ENCODE measurements at regions of chr7 and their contacts with region 1.

Region 1: DNA sequence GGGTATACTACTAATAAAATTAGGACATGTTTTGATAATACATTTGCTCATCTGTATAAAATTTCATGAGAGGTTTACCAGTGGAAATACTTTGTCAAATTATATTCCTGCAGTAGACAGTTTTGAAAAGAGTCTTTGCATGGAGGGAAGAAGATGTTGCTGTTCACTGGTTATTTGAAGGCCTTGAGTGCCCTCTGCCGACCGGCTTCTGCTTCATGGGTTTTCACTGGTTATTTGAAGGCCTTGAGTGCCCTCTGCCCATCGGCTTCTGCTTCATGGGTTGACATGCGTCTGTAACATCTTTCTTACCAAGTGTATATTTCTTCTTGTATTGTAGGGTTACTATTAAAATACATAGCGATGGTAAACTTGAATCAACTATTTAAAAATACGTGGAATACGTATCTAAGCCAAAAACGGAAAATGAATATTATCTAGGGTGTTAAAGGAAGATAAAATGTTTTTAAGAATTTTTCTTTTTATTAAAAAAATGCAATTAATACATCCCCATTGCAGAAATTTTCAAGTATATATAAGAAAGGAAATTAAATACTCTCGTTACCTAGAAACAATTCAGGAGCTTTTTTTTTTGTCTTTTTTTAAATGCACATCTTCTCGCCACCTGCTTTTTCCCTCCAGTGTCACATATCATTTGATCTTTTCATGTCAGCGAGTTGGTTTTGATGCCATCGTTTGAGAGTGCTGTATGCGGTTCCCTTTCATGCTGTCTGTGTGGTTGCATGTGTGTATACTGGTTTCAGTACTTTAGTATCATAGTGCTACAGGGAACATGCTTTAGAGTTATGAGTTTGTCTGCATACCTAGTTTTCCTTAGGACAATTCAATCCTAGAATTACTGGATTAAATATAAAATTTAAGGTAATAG is 73.4 kb downstream of the SHH start:
- DNase-seq: peak; percentile 43 to 96 (median 82)

Region 2: DNA sequence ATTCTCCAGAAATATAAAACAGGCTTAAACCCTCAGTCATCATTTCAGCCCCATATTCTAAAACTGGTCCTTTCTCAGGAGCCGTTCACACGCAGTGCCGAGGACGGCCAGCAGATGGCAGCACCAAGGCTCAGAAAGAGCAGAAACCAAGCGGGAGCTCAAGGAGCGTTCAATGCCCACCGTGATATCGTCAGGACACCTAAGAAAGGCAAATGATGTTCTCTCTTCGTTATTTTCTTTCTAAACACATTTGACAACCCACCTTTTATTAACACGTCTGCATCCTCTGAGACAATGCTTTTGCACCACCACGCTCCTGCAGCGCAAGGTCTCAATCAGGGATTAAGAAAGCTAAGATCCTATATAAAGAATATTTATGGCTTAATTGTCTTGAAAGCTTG is 140.1 kb before region 1 on chr7:
- intact Hi-C with region 1: loop called (anchors 1 kb)
- DNase-seq: peak; percentile 64 to 97 (median 90)

Region 3: DNA sequence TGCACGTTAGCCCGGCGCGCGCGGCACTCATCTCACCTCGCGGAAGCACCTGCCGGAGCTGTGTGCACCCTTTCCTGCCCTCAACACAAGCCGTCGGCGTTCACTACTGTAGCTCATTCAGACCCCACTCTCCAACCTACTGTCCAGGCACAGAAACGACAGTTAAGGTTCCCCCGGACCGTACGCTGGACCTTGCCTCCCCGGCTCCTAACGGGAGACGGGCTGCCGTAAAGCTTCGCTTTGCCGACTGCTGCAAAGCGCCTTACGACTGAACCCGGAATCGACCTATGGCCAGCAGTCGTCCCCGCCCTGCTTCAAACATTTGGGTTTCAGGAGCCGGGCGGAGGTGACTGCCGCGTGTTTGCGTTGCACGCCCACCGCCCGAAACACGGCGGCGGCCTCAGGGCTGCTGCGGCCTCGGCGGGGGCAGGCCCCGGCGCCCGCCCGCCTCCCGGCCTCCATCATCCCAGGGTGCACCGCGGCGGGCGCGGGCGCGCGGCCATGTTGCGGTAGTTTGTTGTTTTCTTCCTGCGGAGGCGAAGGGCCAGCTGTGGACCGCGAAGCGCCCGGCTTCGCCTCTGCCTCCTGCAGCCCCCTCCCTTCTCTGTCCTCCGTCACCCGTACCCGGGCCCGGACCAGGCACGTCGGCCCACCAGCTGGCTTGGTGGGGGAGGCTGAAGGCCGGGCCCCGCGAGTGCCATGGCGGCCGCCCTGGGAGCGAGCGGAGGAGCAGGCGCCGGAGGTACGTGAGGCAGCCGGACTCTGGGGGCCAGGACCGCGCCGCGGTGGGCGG is 94.5 kb before region 1 on chr7 and contains the start of gene RBM33:
- intact Hi-C with region 1: loop called (anchors 5 kb)
- DNase-seq: peak; percentile 66 to 95 (median 76)

Region 4: DNA sequence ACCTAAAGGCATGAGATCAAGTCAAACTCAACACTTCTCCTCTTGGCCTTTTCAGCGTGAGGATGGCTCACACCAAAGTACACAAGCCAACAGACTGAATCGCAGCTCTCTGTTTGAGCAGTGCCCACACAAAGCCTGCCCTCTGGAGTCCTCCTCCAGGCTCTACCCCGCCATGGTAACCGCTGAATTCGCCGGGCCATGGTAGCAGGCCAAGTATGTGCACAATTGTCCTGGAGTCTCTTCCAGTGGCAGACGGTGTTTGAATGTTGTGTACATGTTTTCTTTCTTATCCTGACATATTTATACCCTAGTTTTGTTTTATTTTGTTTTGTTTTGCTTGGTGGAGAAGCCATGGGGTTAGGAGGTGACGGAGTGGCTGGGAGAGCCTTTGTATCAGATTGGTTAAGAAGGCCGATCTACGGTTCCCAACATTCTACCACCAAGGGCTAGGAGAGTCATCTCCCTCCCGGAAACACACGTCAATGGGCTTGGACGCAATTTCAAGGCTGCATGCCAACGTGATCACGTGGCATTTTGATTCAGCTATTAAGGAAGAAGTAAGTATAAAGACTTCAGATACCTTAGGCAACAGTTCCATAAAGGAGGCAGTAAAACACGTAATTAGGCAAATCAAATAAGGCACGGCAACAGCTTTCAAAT is 85.5 kb after region 1 on chr7:
- intact Hi-C with region 1: no loop called
- DNase-seq: peak in 1 of 10 donors; percentile 52

Measured in posterior cingulate gyrus (tissue), 11 donors.